GM13977 (cell line): ENCODE measurements at regions of chr1 and their contacts with region 1.

Region 1: GRCh38 chr1:20212685-20213331 is 26.5 kb upstream of the PLA2G2C start:
- DNase-seq: peak; percentile 66
- CTCF ChIP-seq: peak; percentile 58

Region 2: GRCh38 chr1:20493839-20494608 is 281.2 kb after region 1 on chr1:
- in situ Hi-C with region 1: loop called (anchors 10 kb)
- DNase-seq: peak; percentile 85
- CTCF ChIP-seq: peak; percentile 94